ENCODE measurements at regions of chr1 and their contacts with region 1.

Region 1: DNA sequence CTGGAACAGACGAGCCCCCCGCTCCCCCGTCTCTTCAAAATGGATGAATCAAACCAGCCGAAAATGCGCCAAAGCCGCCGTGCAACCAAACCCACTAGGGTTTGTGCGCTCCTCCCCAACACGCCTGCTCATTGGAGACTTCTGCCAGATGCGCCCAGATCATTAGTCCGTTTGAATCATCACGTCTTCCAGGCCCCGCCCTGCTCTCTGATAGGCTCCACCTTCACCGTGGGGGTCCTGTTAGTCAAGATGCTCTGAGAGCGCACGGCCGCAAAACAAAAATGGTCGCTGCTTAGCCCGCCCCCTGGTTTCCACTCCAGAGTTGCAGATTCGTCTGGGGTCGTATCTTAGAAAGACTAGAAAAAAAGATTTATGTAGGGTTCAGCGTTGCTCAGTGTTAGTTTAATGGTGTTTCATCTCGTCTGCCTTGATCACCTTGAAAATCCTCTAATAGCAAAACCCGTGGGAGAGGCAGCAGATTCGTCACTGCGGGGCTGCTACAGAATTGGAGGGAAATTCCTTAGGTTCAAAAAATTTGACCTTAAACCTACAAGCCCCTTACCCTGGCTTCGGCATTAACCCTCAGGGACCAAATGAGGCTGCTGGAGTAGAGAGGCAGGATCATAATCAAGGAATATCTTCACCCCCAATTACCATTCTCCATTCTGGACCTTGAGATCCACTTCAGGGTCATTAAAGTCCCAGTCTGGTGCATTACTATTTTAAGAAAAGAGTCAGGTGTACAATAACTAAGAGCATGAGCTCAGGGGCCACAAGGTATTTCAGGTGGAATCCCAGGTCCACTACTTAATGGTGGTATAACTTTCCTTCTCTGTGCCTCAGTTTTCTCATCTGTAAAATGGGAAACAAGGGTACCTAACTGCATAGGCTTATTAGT is at the start of gene NUCKS1:
- DNase-seq: peak; percentile 86
- ATAC-seq: peak; percentile 80
- H3K4me3 Mint-ChIP-seq: peak within 1 kb of the TSS; percentile 96
- H3K27ac Mint-ChIP-seq: peak within 1 kb of the TSS; percentile 98
- H3K4me1 Mint-ChIP-seq: peaks cover 43% of the 10 kb centered on the region
- H3K27me3 Mint-ChIP-seq: no peaks in the 10 kb centered on the region
- CTCF ChIP-seq: no peak
- total RNA-seq, gene NUCKS1: 113 and 130 TPM in 2 replicates

Region 2: GRCh38 chr1:204516180-204516879 is 1234.1 kb before region 1 on chr1 and contains the start of gene MDM4:
- CTCF ChIA-PET with region 1: no interaction called
- POLR2A ChIA-PET with region 1: no interaction called
- intact Hi-C with region 1: loop called (anchors 5 kb)
- DNase-seq: peak; percentile 91
- ATAC-seq: peak; percentile 80
- H3K4me3 Mint-ChIP-seq: no peak within 1 kb of the TSS
- H3K27ac Mint-ChIP-seq: no peak within 1 kb of the TSS
- H3K4me1 Mint-ChIP-seq: peaks cover 80% of the 10 kb centered on the region
- H3K27me3 Mint-ChIP-seq: no peaks in the 10 kb centered on the region
- CTCF ChIP-seq: no peak
- total RNA-seq, gene MDM4: 221 and 264 TPM in 2 replicates

Region 3: DNA sequence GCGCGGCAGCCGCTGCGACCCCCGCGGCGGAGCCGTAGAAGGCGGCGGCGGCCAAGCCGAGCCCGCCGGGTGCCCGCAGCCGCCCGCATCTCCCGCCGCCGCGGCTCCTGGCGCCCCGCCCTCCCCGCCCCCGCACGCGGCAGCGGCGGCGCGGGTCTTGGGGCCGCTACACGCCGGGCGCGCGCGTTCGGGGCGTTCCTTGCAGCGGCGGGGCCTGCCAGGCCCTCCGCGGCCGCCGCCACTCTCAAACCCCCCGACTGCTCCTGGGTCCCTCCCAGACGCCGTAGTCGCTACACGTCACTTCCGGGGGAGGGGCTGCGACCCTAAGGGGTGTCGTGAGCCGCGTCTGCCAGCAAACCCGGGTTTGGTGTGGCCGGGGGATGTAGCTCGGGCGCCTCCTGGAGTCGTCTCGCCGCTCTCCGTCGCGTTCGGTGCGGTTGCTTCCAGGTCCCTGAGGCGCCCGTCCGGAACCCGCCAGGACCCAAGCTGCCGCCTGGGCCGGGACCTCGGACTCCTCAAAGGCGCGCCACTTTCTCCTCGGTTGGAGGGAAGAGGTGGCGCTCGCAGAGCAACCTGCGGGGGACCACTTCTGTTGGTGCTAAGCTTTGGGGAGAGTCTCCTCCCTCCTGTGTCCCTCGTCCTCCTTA is 118.5 kb before region 1 on chr1 and contains the start of gene ELK4:
- CTCF ChIA-PET with region 1: no interaction called
- POLR2A ChIA-PET with region 1: interaction called, 6 read pairs
- intact Hi-C with region 1: loop called (anchors 1 kb)
- DNase-seq: peak; percentile 99
- ATAC-seq: peak; percentile 83
- H3K4me3 Mint-ChIP-seq: peak within 1 kb of the TSS; percentile 96
- H3K27ac Mint-ChIP-seq: peak within 1 kb of the TSS; percentile 96
- H3K4me1 Mint-ChIP-seq: peaks cover 46% of the 10 kb centered on the region
- H3K27me3 Mint-ChIP-seq: no peaks in the 10 kb centered on the region
- CTCF ChIP-seq: no peak
- total RNA-seq, gene ELK4: 130 and 141 TPM in 2 replicates

Region 4: DNA sequence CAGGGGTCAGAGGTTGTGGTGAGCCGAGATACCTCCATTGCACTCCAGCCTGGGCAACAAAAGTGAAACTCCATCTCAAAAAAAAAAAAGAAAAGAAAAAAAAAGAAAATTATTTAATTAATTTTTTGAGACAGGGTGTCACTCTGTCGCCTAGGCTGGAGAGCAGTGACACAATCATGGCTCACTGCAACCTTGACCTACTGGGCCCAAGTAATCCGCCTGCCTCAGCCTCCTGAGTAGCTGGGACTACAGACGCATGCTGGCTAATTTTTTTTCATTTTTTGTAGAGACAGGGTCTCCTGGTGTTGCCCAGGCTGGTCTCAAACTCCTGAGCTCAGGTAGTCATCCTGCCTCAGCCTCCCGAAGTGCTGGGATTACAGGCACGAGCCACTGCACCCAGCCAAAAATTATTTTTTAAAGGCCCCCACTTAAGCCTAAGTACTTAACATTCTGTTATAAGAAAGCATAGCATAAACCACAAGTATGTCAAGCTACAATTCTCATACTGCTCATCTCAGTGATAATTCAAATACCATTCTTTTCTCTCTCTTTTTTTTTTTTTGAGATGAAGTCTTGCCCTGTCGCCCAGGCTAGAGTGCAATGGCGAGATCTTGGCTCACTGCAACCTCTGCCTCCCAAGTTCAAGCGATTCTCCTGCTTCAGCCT is 20.3 kb before region 1 on chr1:
- CTCF ChIA-PET with region 1: interaction called, 3 read pairs
- POLR2A ChIA-PET with region 1: interaction called, 10 read pairs
- intact Hi-C with region 1: no loop called
- DNase-seq: no peak
- ATAC-seq: no peak
- H3K4me3 Mint-ChIP-seq: no peak overlapping the region
- H3K27ac Mint-ChIP-seq: no peak overlapping the region
- H3K4me1 Mint-ChIP-seq: peaks cover 7% of the 10 kb centered on the region
- H3K27me3 Mint-ChIP-seq: no peaks in the 10 kb centered on the region
- CTCF ChIP-seq: no peak

Region 5: GRCh38 chr1:205812878-205813754 is 62.7 kb after region 1 on chr1 and contains the start of gene SLC41A1:
- CTCF ChIA-PET with region 1: no interaction called
- POLR2A ChIA-PET with region 1: no interaction called
- intact Hi-C with region 1: loop called (anchors 1 kb)
- DNase-seq: peak; percentile 78
- ATAC-seq: peak; percentile 96
- H3K4me3 Mint-ChIP-seq: peak within 1 kb of the TSS; percentile 95
- H3K27ac Mint-ChIP-seq: peak within 1 kb of the TSS; percentile 83
- H3K4me1 Mint-ChIP-seq: peaks cover 52% of the 10 kb centered on the region
- H3K27me3 Mint-ChIP-seq: no peaks in the 10 kb centered on the region
- CTCF ChIP-seq: no peak
- total RNA-seq, gene SLC41A1: 31.2 and 32.4 TPM in 2 replicates

Region 6: DNA sequence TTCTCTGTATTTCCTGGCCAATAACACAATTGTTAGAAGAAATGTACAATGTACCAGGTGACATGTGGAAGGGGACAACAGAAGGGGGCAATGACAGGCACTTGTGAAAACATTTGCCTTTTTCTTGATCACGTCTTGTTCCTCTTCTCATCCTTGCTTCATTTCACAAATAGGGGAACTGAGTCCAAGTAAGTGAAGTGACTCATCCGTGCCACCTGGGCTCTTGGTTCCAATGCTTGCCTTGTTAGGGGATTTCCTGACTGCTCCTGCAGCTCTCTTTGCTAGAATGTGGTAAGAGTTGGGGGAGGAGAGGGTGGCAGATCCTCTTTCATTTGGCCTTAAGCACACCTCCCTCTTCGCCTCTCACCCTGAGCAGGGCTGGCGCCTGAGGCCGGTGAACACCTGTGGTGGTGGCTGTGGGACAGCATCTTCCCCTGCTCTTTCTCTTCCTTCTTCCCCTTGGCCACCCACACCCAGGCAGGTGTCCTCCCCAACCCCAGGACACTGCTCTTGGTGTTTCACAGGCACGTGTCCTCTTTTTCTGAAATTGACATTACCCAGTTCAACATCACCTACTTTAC is 300.4 kb after region 1 on chr1:
- CTCF ChIA-PET with region 1: no interaction called
- POLR2A ChIA-PET with region 1: no interaction called
- intact Hi-C with region 1: loop called (anchors 2 kb)
- DNase-seq: peak; percentile 71
- ATAC-seq: peak; percentile 86
- H3K4me3 Mint-ChIP-seq: peak overlapping the region; percentile 58
- H3K27ac Mint-ChIP-seq: peak overlapping the region; percentile 95
- H3K4me1 Mint-ChIP-seq: peaks cover 94% of the 10 kb centered on the region
- H3K27me3 Mint-ChIP-seq: no peaks in the 10 kb centered on the region
- CTCF ChIP-seq: no peak

Measured in activated B cell treated with CpG ODN at 0.5 μM for 24 hours (primary cell).